SK-N-SH (cell line): ENCODE measurements at regions of chr3 and their contacts with region 1.

Region 1: DNA sequence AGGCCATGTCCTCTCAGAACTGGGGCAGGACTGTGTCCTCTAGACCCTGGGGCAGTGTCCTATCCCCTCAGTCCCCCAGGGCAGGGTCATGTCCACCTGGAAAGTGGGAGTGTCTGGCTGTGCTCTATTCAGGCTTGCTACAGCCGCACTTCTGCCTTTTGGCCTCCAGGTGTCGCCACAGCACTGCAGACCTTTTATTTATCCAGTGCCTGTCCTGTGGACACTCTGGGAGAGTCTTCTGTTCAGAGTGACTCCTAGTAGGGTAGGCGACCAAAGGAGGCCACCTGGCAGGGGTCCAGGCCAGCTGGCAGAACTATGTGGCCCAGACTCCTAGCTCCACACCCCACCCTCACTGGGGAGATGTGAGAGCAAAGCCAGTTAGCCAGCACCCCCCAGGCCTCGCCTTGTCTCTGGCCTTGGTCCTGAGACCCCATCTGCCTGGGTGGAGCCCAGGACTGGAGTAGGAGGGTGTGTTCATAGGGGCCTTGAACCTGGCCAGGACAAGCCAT is 3.9 kb downstream of the TMIE start:
- DNase-seq: peak; percentile 81
- H3K4me3 ChIP-seq: no peak overlapping the region; a peak in 1 of 4 replicates
- H3K27ac ChIP-seq: no peak overlapping the region
- H3K4me1 ChIP-seq: peaks cover 0 to 32% of the 10 kb centered on the region in 2 experiments; a peak in 1 of 4 replicates
- H3K27me3 ChIP-seq: peaks cover 14% of the 10 kb centered on the region
- CTCF ChIP-seq: peak; percentile 94
- EP300 ChIP-seq: no peak
- RAD21 ChIP-seq: peak; percentile 97

Region 2: DNA sequence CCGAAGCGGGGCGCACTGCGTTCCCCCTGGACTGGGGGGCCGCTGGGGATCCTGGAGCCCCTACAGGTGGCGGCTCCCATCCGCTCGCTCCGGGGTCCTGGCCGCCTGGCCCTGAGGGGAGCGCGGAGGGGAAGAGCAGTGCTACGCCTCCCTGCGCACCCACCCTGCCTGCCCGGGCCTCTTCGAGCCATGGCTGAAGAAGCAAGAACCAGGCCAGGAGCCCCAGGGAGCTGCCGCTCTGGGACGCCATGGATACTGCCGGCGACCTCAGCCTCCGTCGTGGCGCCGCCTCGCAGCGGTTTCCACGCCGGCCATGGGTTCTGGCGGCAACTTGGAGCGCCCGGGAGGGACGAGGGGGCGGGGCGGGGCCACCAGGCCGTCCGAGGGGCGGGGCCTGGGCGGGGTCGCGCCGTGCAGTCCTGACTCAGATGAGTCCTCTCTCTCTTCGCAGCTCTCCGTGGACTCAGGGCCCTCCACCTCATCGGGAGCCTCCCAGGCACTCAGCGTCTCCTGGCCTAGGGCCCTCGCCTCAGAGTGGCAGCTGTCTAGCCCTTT is 107.2 kb after region 1 on chr3:
- CTCF ChIA-PET with region 1: no interaction called
- POLR2A ChIA-PET with region 1: no interaction called
- DNase-seq: peak; percentile 84
- H3K4me3 ChIP-seq: no peak overlapping the region
- H3K27ac ChIP-seq: no peak overlapping the region
- H3K4me1 ChIP-seq: no peaks in the 10 kb centered on the region; a peak in 1 of 4 replicates
- H3K27me3 ChIP-seq: no peaks in the 10 kb centered on the region
- CTCF ChIP-seq: no peak
- EP300 ChIP-seq: no peak
- RAD21 ChIP-seq: no peak

Region 3: DNA sequence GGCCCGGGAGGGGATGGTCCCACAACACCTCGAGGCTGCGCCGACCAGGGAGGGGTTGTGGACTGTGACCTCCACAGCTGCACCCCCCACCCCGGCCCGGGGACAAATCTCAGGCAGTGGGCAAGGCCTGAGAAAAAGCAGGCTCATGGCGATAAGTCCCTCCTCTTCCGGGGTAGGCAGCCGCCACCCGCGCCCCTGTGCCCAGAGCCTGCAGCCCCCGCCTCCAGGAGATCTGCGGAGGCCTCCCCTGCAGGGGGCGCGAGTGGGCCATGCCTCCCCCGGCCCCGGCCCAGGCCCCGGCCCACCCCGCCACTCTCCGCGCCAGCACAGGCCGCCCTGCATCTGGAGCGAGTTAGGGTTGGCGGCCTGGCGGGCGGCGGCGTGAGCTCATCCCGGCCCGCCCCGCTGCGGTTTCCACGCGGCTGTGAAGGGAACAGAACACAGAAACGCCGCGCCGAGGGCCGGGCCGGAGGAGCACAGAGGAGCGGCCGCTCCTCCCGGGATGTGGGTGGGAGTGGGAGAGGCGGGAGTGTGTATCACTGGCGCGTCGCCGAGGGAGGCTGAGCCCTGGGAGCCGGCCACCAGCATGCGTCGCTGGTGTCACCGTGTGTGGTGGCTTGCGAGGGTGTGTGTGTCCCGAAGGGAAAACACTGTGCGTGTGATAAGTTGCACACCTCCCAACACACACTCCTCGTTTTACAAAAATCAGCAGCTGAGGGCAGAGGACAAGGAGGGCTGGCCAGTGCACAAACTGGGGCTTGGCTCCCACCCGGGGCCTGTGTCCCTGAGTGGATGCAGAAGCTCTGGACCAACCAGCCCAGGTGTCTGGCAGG is 140.9 kb after region 1 on chr3:
- CTCF ChIA-PET with region 1: interaction called, 25 read pairs
- POLR2A ChIA-PET with region 1: interaction called, 15 read pairs
- DNase-seq: peak; percentile 98
- H3K4me3 ChIP-seq: peak overlapping the region; percentile 46 to 49; a peak in 3 of 4 replicates
- H3K27ac ChIP-seq: peak overlapping the region; percentile 38 to 98
- H3K4me1 ChIP-seq: peaks cover 0 to 27% of the 10 kb centered on the region in 2 experiments; a peak in 2 of 4 replicates
- H3K27me3 ChIP-seq: no peaks in the 10 kb centered on the region
- CTCF ChIP-seq: peak; percentile 53
- EP300 ChIP-seq: peak in 1 of 2 experiments; percentile 21; a peak in 1 of 4 replicates
- RAD21 ChIP-seq: peak; percentile 64

Region 4: GRCh38 chr3:46888705-46889104 is 183.6 kb after region 1 on chr3:
- CTCF ChIA-PET with region 1: interaction called, 33 read pairs
- POLR2A ChIA-PET with region 1: no interaction called
- DNase-seq: no peak
- H3K4me3 ChIP-seq: no peak overlapping the region
- H3K27ac ChIP-seq: no peak overlapping the region
- H3K4me1 ChIP-seq: peaks cover 0 to 14% of the 10 kb centered on the region in 2 experiments; a peak in 1 of 4 replicates
- H3K27me3 ChIP-seq: peaks cover 5% of the 10 kb centered on the region
- CTCF ChIP-seq: no peak
- EP300 ChIP-seq: no peak
- RAD21 ChIP-seq: no peak